Motor neuron (in vitro differentiated cells): ENCODE measurements at regions of chr1 and their contacts with region 1.

Region 1: DNA sequence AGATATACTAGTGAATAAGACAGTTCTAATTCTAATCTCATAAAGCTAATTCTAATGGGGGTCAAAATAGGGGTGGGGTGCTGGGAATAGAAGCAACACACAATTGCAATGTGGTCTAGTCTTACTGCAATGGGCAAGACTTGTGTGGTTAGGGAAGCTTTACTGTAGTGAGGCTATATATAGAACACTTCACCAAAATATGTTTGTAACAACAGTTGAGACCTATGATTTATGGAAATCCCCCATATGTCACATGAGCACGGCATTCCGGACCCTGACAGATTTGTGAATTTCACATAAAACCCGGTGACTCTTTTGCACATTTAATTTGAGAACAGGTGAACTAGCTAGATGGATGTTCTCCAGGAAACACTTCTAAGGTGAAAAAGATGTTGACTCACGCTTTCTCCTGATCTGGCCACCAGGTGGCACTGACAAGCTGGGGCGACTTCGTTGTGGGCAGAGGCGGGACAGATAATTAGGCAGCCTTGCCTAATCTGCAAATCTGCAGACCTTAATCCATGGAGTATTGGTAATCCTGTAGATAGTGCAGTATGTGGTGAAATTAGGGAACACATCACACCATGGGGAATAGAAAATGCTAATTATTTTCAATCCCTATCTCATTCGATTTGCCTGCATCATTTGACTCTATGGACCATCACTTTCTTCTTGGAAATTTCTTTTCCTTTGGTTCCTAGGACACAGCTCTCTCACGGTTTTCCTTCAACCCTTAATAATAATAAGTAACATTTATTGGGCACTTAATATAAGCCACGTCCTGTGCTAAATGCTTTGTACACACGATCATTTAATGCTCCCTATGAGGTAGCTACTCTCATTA is 37.7 kb downstream of the KIAA0040 start:
- ATAC-seq: peak in 4 of 8 experiments; percentile 11 to 73 (median 46)
- H3K4me3 ChIP-seq: no peak overlapping the region
- H3K27ac ChIP-seq: no peak overlapping the region
- H3K4me1 ChIP-seq: peaks cover 20 to 25% of the 10 kb centered on the region in 2 donors

Region 2: GRCh38 chr1:174964261-174964971 is 190.4 kb before region 1 on chr1:
- in situ Hi-C with region 1: no loop called
- ATAC-seq: peak in 3 of 8 experiments; percentile 76 to 87 (median 87)
- H3K4me3 ChIP-seq: no peak overlapping the region
- H3K27ac ChIP-seq: no peak overlapping the region
- H3K4me1 ChIP-seq: no peaks in the 10 kb centered on the region

Region 3: DNA sequence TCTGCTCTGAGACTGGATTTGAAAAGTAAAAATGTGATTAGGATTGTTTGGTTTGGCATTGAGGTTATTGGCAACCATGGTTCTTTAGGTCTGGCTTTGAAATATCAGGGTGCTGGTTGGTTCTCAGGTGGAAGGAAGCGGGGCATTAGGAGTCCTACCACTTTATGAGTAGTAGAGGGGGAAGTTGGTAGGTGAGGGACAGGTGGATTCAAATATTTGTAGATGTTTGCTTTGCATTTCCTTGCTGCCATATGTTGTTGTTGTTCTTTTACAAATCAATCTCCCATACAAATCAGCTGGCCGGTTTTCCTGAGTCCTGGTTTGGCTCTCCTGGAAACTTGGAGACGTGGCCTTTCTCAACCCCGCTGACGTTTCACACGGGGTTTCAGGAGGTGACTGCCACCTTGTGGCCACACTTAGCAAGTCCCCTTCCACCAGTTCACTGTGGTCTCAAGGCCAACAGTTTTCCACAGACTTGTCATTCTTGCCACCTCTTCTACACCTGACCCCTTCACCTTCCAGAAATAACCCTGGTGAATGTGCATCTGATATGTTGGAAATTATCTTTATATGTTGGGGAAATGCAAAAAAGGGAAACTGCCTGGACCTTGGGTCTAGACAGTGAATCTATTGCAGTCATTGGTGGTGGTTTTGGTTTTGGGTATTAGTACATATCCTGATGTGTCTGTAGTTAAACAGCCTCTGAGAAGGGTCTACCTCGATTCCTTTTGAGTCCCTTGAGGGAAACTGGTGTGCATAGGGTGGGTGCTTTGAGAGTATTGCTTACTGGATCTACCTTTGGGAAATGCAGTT is 164.8 kb after region 1 on chr1:
- in situ Hi-C with region 1: loop called in 3 of 9 experiments (anchors 10 to 25 kb)
- ATAC-seq: peak; percentile 60 to 99 (median 80)
- H3K4me3 ChIP-seq: no peak overlapping the region
- H3K27ac ChIP-seq: no peak overlapping the region
- H3K4me1 ChIP-seq: no peaks in the 10 kb centered on the region

Region 4: DNA sequence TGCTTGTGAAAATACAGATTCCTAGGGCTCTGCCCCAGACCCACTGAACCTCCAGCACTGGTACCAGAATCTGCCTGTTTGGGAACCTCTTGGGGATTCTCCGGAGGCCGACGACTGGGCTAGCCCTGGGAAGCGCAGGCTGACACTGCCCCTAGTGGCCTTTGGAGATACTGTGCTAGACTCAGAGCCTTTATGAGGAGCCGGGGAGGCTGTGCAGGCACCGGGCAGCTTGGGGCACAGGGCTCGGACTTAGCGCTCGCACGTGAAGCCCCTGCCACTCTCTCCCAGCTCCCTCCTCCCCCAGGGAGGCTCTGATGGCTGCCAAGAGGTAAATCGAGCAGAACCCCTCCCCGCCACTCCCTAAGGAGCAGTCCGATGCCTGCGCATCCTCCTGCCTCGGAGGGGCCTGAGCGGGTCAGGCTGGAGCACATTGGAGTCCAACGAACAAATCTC is 733.2 kb after region 1 on chr1:
- in situ Hi-C with region 1: loop called in 2 of 9 experiments (anchors 25 kb)
- ATAC-seq: peak; percentile 82 to 99 (median 97)
- H3K4me3 ChIP-seq: no peak overlapping the region
- H3K27ac ChIP-seq: no peak overlapping the region
- H3K4me1 ChIP-seq: peaks cover 9 to 16% of the 10 kb centered on the region in 2 donors

Region 5: DNA sequence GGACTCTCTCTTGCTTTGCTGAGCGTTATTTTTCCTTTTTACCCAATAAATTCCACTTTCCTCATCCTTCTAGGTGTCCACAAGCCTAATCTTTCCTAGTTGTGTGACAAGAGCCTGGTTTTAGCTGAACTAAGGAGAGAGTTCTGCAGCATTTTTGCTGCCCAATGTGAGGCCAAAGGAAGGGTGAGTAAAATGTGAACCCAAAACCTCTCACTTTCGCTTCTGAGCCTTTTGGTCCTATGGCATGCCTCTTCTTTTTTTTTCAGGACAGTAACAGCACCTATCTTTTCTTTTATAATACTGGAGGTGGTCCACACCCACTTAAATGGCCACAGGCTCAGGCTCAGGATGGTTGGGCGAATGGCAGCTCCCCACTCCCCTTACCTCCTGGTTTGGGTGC is 941.2 kb after region 1 on chr1:
- in situ Hi-C with region 1: loop called in 1 of 9 experiments (anchors 25 kb)
- ATAC-seq: no peak
- H3K4me3 ChIP-seq: no peak overlapping the region
- H3K27ac ChIP-seq: no peak overlapping the region
- H3K4me1 ChIP-seq: no peaks in the 10 kb centered on the region

Region 6: GRCh38 chr1:176897350-176898236 is 1742.7 kb after region 1 on chr1:
- in situ Hi-C with region 1: loop called in 1 of 9 experiments (anchors 25 kb)
- ATAC-seq: peak; percentile 72 to 100 (median 100)
- H3K4me3 ChIP-seq: peak overlapping the region in 3 of 5 donors; percentile 5 to 14 (median 14)
- H3K27ac ChIP-seq: no peak overlapping the region
- H3K4me1 ChIP-seq: peaks cover 3 to 6% of the 10 kb centered on the region in 2 donors